ENCODE measurements at regions of chr6 and their contacts with region 1.

Region 1: DNA sequence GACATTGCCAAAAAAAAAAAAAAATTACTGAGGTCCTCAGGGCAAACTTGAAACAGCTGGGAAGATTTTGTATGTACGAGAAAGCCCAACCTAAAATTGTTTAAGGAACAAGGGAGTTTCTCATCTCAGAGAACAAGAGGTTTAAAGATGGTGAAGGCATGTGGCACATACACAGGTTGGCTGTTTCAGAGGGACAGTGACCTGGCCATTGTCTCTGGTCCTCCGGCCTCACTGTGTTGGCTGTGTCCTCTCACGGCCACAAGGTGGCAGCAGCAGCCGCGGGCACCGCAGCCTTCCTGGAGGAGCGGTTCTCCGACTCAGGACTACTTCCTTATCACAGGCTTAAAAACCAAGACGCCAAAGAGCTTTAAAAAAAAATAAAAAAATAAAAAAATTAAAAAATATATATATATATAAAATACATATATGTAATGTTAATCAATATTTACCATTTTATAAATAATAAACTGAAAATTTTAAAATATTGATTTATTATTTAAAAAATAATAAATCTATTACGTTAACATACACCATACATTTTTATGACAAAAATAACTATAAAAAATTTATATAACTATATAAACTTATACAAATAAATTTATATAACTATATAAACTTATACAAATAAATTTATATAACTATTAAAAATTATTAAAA is 52.8 kb downstream of the GTF2H5 start:
- DNase-seq: peak; percentile 82
- H3K4me3 Mint-ChIP-seq: no peak overlapping the region
- H3K27ac Mint-ChIP-seq: no peak overlapping the region
- H3K4me1 Mint-ChIP-seq: no peaks in the 10 kb centered on the region
- H3K27me3 Mint-ChIP-seq: no peaks in the 10 kb centered on the region
- CTCF ChIP-seq: peak; percentile 86

Region 2: DNA sequence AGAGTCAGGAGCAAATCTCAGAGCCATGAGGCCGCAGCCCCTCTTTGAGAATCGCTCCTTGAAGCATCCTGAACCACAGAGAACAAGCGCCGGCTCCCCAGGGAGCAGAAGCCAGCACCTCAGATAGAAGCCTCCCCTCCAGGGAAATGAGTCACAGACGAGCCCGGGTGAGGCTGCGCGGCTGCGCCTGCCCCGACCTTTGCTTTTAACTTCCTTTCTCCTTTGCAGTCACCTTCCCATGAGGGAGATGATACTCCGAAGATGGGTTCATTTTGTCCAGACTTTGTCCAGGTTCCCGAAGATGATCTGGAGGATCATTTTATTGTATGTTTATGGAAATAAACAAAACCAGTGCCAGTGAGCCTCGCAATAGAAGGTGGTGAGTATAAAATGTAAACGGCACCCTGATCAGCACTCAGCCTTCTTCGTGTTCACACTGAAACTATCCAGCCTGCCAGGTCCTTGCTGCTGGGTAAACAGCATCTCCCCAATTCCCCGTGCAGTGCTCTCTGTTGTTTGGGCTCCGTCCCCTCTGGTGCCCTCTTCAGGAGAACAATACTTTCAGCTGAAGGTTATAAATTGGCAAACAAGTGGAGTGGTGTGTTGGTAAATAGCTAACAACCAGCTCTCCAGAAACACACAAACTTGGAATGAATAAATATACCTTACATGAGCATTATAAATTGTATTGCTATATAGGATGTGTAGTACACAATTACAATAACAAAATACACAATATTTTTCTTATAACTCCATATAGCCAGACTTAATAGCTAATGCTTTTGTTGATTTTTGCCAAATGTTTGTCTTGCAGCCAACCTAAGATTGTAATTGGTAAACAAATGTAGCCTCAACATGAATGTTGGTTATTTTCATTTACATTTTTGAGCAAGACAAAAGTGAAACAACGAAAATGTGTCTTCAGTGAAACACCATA is 297.5 kb after region 1 on chr6:
- CTCF ChIA-PET with region 1: interaction called, 9 read pairs
- intact Hi-C with region 1: loop called (anchors 2 kb)
- DNase-seq: peak; percentile 63
- H3K4me3 Mint-ChIP-seq: peak overlapping the region; percentile 69
- H3K27ac Mint-ChIP-seq: peak overlapping the region; percentile 56
- H3K4me1 Mint-ChIP-seq: peaks cover 9% of the 10 kb centered on the region
- H3K27me3 Mint-ChIP-seq: no peaks in the 10 kb centered on the region
- CTCF ChIP-seq: peak; percentile 45